ENCODE measurements at regions of chr1 and their contacts with region 1.

Region 1: GRCh38 chr1:151254217-151255213 is at the start of gene PSMD4:
- DNase-seq: peak; percentile 96
- ATAC-seq: peak; percentile 95
- H3K4me3 Mint-ChIP-seq: peak within 1 kb of the TSS; percentile 96
- H3K27ac Mint-ChIP-seq: peak within 1 kb of the TSS; percentile 96
- H3K4me1 Mint-ChIP-seq: peaks cover 27% of the 10 kb centered on the region
- H3K27me3 Mint-ChIP-seq: no peaks in the 10 kb centered on the region
- total RNA-seq, gene PSMD4: 187 to 243 TPM

Region 2: DNA sequence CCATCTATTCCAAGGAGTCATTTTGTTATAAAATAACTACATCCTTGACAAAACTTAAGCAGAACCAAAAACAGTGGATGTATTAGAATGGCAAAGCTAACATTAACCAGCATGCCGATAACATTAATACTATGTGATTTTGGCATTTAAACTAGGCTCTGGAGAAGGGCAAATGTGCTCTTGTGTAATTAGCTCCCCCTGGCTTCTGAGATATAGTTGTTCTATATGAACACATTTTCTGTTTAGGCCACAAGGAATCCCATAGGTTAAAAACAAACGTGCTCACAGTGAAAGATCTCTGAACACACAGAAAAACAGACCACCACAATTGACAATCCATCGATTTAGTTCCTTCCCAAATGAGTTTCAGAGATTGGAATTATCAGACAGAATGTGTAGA is 824.7 kb before region 1 on chr1:
- CTCF ChIA-PET with region 1: no interaction called
- POLR2A ChIA-PET with region 1: no interaction called
- intact Hi-C with region 1: no loop called
- DNase-seq: no peak
- ATAC-seq: peak; percentile 60
- H3K4me3 Mint-ChIP-seq: no peak overlapping the region
- H3K27ac Mint-ChIP-seq: peak overlapping the region; percentile 16
- H3K4me1 Mint-ChIP-seq: peaks cover 7% of the 10 kb centered on the region
- H3K27me3 Mint-ChIP-seq: no peaks in the 10 kb centered on the region

Region 3: DNA sequence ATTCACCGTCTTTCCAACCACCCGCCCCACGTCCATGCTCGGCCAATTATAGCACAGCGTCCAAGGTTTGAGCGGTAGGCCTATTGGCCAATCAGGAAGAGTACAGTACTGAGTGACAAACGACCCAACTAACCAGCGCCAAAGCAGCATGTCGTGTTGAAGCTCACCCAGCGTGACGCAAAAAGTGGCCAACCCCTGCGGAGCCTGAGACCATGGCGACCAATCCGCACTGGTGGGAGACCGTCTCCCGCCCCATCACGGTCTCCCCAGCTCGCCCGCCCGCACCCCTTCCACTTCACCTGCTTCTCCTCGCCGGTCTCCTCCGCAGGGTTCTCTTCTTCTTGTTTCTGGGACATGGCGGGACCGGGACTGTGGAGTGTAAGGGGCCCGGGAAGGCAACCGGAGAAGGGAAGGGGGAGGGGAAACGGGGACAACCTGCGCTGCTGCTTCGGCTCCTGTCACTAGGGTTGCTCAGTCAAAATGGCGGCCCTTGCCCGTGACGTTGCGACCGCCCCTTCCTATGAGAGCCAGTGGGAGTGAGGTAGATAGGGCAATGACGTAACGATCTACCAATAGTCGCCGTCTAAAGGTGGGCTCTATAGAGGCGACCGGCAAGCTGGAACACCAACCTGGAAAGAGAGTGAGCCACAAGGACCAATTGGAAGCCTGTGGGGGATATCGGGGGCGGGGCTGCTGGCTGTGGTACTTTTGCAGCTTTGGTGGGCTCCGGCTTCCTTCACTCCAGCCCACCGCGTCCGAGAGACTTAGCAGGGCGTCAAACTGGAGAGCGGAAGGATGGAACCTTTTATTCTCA is 625.2 kb before region 1 on chr1 and contains the start of gene ENSA:
- CTCF ChIA-PET with region 1: no interaction called
- POLR2A ChIA-PET with region 1: no interaction called
- intact Hi-C with region 1: loop called in 1 of 2 experiments (anchors 1 kb)
- DNase-seq: peak; percentile 97
- ATAC-seq: peak; percentile 89
- H3K4me3 Mint-ChIP-seq: no peak within 1 kb of the TSS
- H3K27ac Mint-ChIP-seq: no peak within 1 kb of the TSS
- H3K4me1 Mint-ChIP-seq: peaks cover 29% of the 10 kb centered on the region
- H3K27me3 Mint-ChIP-seq: no peaks in the 10 kb centered on the region
- total RNA-seq, gene ENSA: 197 to 240 TPM

Region 4: DNA sequence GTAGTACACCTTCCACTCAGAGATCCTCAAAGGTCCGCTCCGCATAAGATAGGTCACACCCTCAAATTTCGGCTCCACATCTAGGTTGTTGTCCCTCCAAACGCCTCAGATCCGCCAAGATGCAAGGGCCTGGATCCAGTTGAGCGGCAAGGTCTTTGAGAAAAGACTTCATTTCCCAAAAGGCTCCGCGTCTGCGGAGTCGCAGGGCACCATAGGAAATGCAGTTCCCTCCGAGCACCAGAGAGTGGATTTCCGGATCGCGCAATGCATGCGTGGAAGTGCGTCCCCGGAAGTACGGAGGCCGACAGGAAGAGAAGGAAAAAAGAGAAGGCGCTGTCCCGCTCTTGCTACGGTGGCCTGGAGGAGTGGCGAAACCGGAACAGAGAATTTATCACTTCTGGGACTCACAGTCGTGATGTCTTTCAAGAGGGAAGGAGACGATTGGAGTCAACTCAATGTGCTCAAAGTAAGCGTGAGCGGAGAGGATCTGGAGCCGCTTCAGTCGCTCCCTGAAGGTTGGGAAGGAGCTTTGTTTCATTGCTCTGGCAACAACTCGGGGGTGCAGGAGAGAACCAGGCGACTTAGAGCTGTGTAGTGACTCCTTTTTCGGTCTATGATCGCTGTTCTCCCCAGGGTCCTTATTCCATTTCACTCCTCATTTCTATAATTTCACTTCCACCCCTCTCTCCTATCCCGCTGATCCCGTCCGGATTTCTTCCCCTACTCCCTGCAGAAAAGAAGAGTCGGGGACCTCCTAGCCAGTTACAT is 88.6 kb before region 1 on chr1 and contains the starts of genes LYSMD1 and SCNM1:
- CTCF ChIA-PET with region 1: interaction called, 4 read pairs
- POLR2A ChIA-PET with region 1: interaction called, 11 read pairs
- intact Hi-C with region 1: loop called (anchors 1 kb)
- DNase-seq: peak; percentile 98
- ATAC-seq: peak; percentile 96
- H3K4me3 Mint-ChIP-seq: peak within 1 kb of the TSS; percentile 92
- H3K27ac Mint-ChIP-seq: peak within 1 kb of the TSS; percentile 98
- H3K4me1 Mint-ChIP-seq: peaks cover 48% of the 10 kb centered on the region
- H3K27me3 Mint-ChIP-seq: no peaks in the 10 kb centered on the region
- total RNA-seq, gene LYSMD1: 4.3 to 5.1 TPM
- total RNA-seq, gene SCNM1: 64.3 to 90.8 TPM

Region 5: GRCh38 chr1:151210830-151211229 is 43.7 kb before region 1 on chr1:
- CTCF ChIA-PET with region 1: interaction called, 10 read pairs
- POLR2A ChIA-PET with region 1: interaction called, 3 read pairs
- intact Hi-C with region 1: no loop called
- DNase-seq: no peak
- ATAC-seq: peak; percentile 48
- H3K4me3 Mint-ChIP-seq: no peak overlapping the region
- H3K27ac Mint-ChIP-seq: peak overlapping the region; percentile 12
- H3K4me1 Mint-ChIP-seq: peaks cover 36% of the 10 kb centered on the region
- H3K27me3 Mint-ChIP-seq: no peaks in the 10 kb centered on the region

Region 6: DNA sequence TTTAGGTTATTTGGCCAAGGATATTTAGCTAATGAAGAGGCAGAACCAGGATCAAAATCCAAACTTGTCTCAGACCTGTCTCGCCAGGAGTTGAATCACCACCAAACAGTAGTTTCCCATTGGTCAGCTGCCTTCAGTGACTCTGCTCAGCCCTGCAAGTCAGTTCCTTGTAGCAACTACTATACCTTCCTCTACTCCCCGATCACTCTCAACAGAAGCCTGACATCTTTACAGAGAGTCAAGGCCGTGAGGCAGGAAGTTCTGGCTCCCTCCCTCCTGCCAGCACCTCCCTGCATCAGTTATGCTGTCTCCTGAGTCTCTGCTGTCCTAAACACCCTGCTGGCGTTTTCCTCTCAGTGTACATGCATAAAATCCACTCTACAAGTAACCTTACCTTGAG is 13.2 kb after region 1 on chr1:
- CTCF ChIA-PET with region 1: interaction called, 10 read pairs
- POLR2A ChIA-PET with region 1: interaction called, 12 read pairs
- intact Hi-C with region 1: no loop called
- DNase-seq: no peak
- ATAC-seq: no peak
- H3K4me3 Mint-ChIP-seq: no peak overlapping the region
- H3K27ac Mint-ChIP-seq: no peak overlapping the region
- H3K4me1 Mint-ChIP-seq: no peaks in the 10 kb centered on the region
- H3K27me3 Mint-ChIP-seq: no peaks in the 10 kb centered on the region

Region 7: DNA sequence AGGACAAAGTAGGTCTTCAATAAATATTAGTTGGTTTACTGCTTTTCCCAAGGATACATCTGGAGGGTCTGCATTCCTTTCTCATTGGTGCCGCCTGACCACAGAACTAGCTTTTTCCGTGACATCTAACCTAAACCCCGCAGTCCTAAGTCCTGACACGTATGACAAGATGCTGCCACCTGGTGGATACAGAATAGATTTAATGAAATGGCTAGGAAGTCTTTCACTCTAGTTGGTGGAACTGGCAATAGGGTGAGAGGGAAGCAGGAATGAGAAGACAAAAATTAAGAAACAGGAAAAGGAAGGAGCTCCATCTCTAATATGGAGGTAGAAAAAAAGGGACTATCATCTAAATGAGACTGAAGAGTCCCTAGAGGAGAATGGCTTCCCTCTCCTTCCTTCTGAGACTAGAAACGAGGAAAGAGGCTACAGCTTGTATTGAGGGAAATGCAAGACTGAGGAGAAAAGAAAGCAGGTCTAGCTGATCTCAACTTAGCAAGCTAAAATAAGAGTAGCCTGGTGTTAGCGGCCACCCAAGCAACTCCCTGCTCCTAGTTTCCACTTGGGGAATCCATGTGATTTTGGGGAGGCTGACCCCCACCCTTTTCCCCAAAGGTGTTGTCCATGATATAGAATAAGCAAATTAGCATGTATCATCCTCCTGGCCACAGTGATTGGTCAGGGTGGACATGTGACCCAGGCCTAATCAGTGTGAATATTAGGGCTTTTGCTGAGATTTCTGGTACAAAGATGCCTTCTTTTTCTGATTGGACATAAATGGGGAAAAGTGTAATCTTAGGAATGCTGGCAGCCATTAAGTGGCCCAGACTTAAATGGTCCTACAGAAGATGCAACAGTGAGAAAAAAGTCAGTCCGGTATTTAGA is 86.6 kb after region 1 on chr1:
- CTCF ChIA-PET with region 1: interaction called, 12 read pairs
- POLR2A ChIA-PET with region 1: no interaction called
- intact Hi-C with region 1: no loop called
- DNase-seq: peak; percentile 65
- ATAC-seq: peak; percentile 91
- H3K4me3 Mint-ChIP-seq: no peak overlapping the region
- H3K27ac Mint-ChIP-seq: peak overlapping the region; percentile 39
- H3K4me1 Mint-ChIP-seq: peaks cover 24% of the 10 kb centered on the region
- H3K27me3 Mint-ChIP-seq: no peaks in the 10 kb centered on the region

Region 8: DNA sequence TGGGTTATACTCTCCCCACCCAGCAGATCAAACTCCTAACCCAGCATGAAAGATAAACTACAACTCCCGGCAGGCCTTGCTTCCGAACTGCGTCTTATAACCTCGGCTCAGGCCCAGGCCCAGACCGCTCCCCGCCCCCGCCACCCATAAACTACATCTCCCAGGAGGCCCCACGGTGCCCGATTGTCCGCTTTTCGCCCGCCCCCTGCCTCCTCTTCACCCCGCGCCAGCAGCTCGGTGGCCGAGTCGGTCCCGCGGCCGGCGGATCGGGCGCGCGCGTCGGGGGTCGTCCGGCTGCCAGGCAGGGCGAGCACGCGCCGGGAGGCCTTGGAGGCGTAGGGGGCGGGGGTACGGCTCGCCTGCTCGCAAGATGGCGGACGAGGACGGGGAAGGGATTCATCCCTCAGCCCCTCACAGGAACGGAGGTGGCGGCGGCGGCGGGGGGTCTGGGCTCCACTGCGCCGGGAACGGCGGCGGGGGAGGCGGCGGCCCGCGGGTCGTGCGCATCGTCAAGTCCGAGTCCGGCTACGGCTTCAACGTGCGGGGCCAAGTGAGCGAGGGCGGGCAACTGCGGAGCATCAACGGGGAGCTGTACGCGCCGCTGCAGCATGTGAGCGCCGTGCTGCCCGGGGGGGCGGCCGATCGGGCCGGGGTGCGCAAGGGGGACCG is 357.5 kb after region 1 on chr1 and contains the start of gene SNX27:
- CTCF ChIA-PET with region 1: no interaction called
- POLR2A ChIA-PET with region 1: no interaction called
- intact Hi-C with region 1: loop called in 1 of 2 experiments (anchors 2 kb)
- DNase-seq: peak; percentile 95
- ATAC-seq: peak; percentile 93
- H3K4me3 Mint-ChIP-seq: peak within 1 kb of the TSS; percentile 99
- H3K27ac Mint-ChIP-seq: peak within 1 kb of the TSS; percentile 95
- H3K4me1 Mint-ChIP-seq: peaks cover 46% of the 10 kb centered on the region
- H3K27me3 Mint-ChIP-seq: peaks cover 6% of the 10 kb centered on the region
- total RNA-seq, gene SNX27: 28.5 to 29.1 TPM

Region 9: GRCh38 chr1:152107984-152108881 is 853.7 kb after region 1 on chr1:
- CTCF ChIA-PET with region 1: no interaction called
- POLR2A ChIA-PET with region 1: no interaction called
- intact Hi-C with region 1: no loop called
- DNase-seq: peak; percentile 14
- ATAC-seq: no peak
- H3K4me3 Mint-ChIP-seq: no peak overlapping the region
- H3K27ac Mint-ChIP-seq: no peak overlapping the region
- H3K4me1 Mint-ChIP-seq: no peaks in the 10 kb centered on the region
- H3K27me3 Mint-ChIP-seq: peaks cover 18% of the 10 kb centered on the region

Measured in activated CD4-positive, alpha-beta T cell treated with anti-CD3 and anti-CD28 coated beads for 36 hours (primary cell).